Activated naive CD4-positive, alpha-beta T cell treated with anti-CD3 and anti-CD28 coated beads for 36 hours (primary cell): ENCODE measurements at regions of chr9 and their contacts with region 1.

Region 1: DNA sequence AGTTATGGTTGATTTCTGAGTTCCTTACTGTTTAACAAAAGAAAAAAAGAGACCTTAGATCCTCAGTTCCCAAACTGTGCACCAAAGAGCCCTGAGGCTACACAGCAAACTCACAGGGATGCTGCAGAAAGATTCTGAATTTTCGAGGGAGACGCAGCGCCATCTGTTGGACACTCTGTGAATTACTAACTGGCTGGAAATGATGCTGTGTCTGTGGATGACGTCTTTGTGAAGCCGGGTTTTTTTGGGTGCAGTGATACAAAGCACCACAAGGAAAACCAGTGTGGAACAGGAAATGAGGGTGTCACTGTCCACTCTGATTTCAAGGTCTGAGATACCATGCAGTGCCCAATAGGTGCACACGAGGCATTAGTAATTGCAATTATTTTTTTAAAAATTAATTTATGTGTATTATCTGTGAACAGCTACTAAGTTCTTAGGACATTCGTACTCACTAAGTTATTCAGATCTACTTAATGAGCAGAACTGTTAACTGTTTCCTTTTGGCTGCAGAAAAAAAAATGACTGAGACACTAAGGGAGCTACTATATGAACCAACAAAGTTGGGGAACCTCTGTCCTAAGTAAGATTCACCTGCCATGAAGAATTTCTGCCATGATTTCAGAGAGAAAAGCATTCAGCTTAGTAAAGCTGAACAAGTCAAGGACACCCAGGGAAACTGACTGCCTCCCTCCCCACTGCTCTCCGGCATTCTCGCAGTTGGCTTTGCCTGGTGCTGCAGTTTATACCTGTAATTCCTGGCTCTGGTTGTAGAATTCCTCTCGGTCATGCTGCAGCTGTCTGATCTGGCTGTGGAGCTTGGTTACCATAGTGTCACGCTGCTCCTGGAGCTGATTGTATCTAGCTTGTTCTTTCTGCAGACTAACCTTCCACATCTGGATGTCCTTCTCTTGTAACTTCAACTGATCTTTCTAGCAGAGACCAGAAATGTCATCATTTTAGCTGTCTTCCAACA is 23.4 kb downstream of the SPACA9 start:
- DNase-seq: peak; percentile 92
- H3K4me3 Mint-ChIP-seq: no peak overlapping the region
- H3K27ac Mint-ChIP-seq: no peak overlapping the region
- H3K4me1 Mint-ChIP-seq: peaks cover 2% of the 10 kb centered on the region
- H3K27me3 Mint-ChIP-seq: no peaks in the 10 kb centered on the region

Region 2: DNA sequence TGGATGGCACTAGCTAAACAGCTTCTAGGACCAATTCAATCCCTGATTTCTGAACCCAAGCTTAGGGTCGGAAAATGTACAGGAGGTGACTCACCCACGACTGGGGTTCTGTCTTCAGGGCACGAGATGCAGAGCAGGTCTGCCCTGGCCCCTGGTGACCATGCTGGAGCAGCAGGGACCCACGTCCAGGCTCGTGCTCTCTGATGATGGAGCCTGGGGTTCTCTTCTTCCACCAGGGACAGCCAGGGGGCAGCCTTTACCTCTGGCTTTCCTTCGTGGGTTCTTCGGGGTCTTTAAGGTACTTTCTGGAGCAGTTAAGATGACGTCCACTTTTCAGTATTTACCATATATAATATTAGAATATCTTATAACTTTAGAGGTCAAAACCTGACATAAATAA is 490.1 kb before region 1 on chr9:
- CTCF ChIA-PET with region 1: interaction called, 5 read pairs
- intact Hi-C with region 1: loop called (anchors 2 kb)
- DNase-seq: peak; percentile 47
- H3K4me3 Mint-ChIP-seq: no peak overlapping the region
- H3K27ac Mint-ChIP-seq: no peak overlapping the region
- H3K4me1 Mint-ChIP-seq: peaks cover 23% of the 10 kb centered on the region
- H3K27me3 Mint-ChIP-seq: peaks cover 45% of the 10 kb centered on the region

Region 3: GRCh38 chr9:132800038-132800648 is 102.0 kb before region 1 on chr9:
- CTCF ChIA-PET with region 1: no interaction called
- intact Hi-C with region 1: loop called (anchors 5 kb)
- DNase-seq: peak; percentile 77
- H3K4me3 Mint-ChIP-seq: no peak overlapping the region
- H3K27ac Mint-ChIP-seq: no peak overlapping the region
- H3K4me1 Mint-ChIP-seq: no peaks in the 10 kb centered on the region
- H3K27me3 Mint-ChIP-seq: peaks cover 16% of the 10 kb centered on the region

Region 4: GRCh38 chr9:132877824-132878694 is 24.1 kb before region 1 on chr9 and contains the start of gene AK8:
- CTCF ChIA-PET with region 1: interaction called, 18 read pairs
- intact Hi-C with region 1: loop called (anchors 2 kb)
- DNase-seq: peak; percentile 71
- H3K4me3 Mint-ChIP-seq: peak within 1 kb of the TSS; percentile 74
- H3K27ac Mint-ChIP-seq: no peak within 1 kb of the TSS
- H3K4me1 Mint-ChIP-seq: peaks cover 8% of the 10 kb centered on the region
- H3K27me3 Mint-ChIP-seq: no peaks in the 10 kb centered on the region
- total RNA-seq, gene AK8: not detected

Region 5: DNA sequence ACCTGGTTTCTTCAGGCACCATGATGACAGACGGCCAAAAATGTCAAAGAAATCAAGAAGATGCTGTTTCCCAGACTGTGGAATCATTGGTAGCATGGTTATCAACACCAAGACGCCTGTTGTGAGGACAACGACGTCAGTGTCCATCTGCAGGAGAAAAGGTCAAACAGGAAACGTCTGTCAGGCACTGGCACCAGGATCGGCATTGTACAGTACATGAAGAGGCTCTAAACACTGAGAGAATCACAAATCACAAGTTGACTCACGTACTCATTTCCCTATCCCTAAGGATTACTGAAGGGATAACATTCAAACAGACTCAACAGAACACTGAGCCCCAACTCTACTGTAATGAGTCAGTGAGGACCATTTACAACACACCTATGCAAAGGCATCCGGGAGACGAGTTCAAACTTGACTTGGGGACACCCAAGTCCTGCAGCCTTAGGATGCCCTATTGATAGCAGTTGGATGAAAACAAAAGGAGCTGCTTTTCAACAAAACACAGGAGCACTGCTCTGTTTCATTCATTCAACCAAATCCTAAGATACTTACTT is 21.3 kb after region 1 on chr9:
- CTCF ChIA-PET with region 1: no interaction called
- intact Hi-C with region 1: no loop called
- DNase-seq: no peak
- H3K4me3 Mint-ChIP-seq: no peak overlapping the region
- H3K27ac Mint-ChIP-seq: no peak overlapping the region
- H3K4me1 Mint-ChIP-seq: no peaks in the 10 kb centered on the region
- H3K27me3 Mint-ChIP-seq: no peaks in the 10 kb centered on the region

Region 6: GRCh38 chr9:132973713-132974112 is 71.6 kb after region 1 on chr9:
- CTCF ChIA-PET with region 1: interaction called, 5 read pairs
- intact Hi-C with region 1: loop called (anchors 1 kb)
- DNase-seq: no peak
- H3K4me3 Mint-ChIP-seq: no peak overlapping the region
- H3K27ac Mint-ChIP-seq: no peak overlapping the region
- H3K4me1 Mint-ChIP-seq: peaks cover 4% of the 10 kb centered on the region
- H3K27me3 Mint-ChIP-seq: peaks cover 7% of the 10 kb centered on the region